PC-3 (cell line): ENCODE measurements at regions of chr1 and their contacts with region 1.

Region 1: GRCh38 chr1:221435504-221435904 is 306.4 kb downstream of the DUSP10 start:
- DNase-seq: peak; percentile 84
- ATAC-seq: peak; percentile 4
- H3K4me3 ChIP-seq: no peak overlapping the region
- H3K27ac ChIP-seq: no peak overlapping the region; the same call in 1 of the 2 replicates
- H3K4me1 ChIP-seq: peaks cover 39% of the 10 kb centered on the region
- H3K27me3 ChIP-seq: no peaks in the 10 kb centered on the region
- CTCF ChIP-seq: peak; percentile 99

Region 2: DNA sequence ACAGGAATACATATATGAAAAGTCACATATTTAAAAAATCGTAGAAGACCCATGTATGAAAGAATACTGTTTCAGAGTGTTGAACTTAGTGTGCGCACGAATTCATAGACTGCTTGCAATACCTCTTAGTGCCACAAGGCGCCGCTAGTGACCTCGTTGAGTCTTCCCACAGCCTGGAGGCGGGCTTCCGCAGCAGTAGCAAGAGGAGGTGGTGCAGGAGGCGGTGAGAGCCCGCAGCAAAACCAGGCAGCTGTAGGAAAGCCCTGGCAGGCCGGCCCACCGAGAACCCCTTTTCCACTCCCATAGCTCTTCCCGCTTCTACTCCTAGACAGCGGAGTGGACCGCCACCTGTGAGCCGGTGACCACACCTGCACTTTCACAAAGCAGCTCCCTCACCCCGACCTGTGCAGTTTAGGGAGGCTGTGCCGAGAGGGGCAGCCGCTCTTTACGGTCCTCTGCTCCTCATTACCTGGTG is 625.3 kb before region 1 on chr1:
- CTCF ChIA-PET with region 1: no interaction called
- POLR2A ChIA-PET with region 1: no interaction called
- intact Hi-C with region 1: loop called (anchors 1 kb)
- DNase-seq: peak; percentile 83
- ATAC-seq: peak; percentile 72
- H3K4me3 ChIP-seq: no peak overlapping the region
- H3K27ac ChIP-seq: no peak overlapping the region
- H3K4me1 ChIP-seq: no peaks in the 10 kb centered on the region
- H3K27me3 ChIP-seq: no peaks in the 10 kb centered on the region
- CTCF ChIP-seq: peak; percentile 95

Region 3: DNA sequence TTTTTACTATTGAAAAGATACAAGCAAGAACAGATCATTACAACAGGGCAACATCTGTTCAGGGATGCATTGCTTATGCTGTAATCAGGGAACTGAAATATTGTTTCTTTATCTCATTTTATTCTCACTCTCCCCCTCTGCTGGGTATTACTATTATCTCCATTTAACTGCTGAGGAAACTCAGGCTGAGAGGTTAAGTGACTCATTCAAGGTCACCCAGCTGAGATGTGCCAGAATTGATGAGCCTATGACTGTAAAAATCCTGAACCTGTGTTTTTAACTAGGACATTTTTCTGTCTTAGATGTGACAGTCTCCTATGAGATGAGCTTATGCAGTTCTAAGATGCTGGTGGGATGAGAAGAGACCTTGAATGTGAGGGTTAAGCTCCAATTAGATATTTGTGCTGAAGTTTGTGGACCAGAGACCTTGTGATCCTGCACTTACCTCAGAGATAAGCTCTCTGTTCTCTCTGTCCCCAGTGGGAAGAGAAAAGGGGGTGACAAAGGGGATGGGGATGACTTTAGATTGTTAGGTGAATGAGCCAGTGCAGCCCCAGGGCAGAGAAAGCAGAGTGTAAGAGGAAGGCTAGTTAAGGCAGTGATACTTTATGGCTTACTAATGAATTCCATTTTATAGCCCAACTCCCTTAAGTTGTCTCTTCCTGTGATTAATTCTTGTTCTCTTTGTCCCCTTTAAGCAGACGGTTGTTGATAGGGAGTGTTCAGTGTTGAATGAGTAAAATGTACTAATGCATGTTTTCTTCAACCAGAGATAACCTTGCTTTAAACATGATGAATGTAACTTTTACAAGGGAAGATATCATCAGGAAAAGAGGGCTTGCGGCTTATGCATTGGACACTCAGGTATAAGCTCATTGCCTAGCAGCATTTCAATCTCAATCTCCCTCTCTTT is 444.8 kb before region 1 on chr1:
- CTCF ChIA-PET with region 1: no interaction called
- POLR2A ChIA-PET with region 1: no interaction called
- intact Hi-C with region 1: loop called (anchors 5 kb)
- DNase-seq: peak; percentile 85
- ATAC-seq: peak; percentile 87
- H3K4me3 ChIP-seq: no peak overlapping the region
- H3K27ac ChIP-seq: peak overlapping the region; percentile 56
- H3K4me1 ChIP-seq: peaks cover 20% of the 10 kb centered on the region
- H3K27me3 ChIP-seq: no peaks in the 10 kb centered on the region
- CTCF ChIP-seq: peak; percentile 63

Region 4: DNA sequence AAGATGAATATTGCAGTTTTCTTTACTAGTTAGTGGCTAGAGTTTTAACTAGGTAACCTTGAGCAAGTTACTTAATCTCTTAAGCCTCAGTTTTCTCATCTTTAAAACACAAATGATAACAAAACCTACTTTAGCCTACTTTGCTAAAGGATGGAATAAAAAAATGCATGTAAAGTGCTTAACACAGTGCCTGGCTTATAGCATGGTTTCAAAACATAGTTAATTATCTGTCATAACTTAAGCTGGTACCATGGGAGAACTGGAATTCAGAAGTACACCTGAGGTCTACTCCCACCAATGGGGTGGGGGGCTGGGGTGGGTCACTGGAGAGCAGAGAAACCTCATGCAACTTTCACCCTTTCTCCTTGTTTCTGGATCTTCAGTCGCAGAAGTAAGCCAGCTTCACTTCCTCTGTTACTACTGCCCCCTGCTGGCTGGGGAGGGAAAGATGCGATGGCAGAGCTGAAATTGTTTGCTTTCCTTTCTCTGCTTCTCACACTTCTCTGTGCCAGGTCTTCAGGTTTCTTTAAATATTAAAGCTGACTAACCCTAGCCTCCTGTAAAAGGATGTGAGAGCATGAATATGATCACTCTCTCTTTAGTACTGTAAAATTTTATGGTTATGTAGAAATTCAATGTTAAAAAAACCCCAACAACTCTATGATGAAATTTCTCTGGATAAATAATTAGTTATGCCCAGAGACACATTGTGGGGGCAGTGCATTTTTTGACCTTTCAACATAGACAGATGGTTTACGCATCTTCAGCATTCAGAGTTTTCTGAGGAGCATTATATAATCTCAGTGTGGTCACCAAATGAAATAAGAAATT is 232.1 kb before region 1 on chr1:
- CTCF ChIA-PET with region 1: interaction called, 4 read pairs
- POLR2A ChIA-PET with region 1: no interaction called
- intact Hi-C with region 1: loop called (anchors 2 kb)
- DNase-seq: peak; percentile 94
- ATAC-seq: peak; percentile 95
- H3K4me3 ChIP-seq: no peak overlapping the region
- H3K27ac ChIP-seq: peak overlapping the region; percentile 8; the same call in 1 of the 2 replicates
- H3K4me1 ChIP-seq: peaks cover 17% of the 10 kb centered on the region
- H3K27me3 ChIP-seq: no peaks in the 10 kb centered on the region
- CTCF ChIP-seq: peak; percentile 87

Region 5: DNA sequence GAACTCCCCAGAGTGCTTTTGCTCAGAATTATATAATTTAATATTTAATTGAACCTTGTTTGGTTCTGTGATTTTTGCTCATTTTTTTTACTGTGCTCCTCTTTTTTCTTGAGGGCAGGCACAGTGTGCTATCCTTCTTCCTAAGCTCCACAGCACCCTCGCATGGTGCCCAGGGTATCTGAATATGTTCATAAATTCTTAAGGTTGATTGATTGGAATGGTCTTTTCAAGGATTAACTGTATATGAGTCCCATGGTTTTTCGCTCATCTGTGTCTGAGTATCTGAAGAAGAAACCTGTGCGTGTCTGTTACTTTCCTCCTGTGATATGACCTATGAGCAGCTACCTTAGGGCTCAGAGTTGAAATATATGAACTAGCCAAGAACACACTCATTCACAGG is 162.6 kb before region 1 on chr1:
- CTCF ChIA-PET with region 1: no interaction called
- POLR2A ChIA-PET with region 1: no interaction called
- intact Hi-C with region 1: loop called (anchors 2 kb)
- DNase-seq: peak; percentile 68
- ATAC-seq: peak; percentile 88
- H3K4me3 ChIP-seq: no peak overlapping the region
- H3K27ac ChIP-seq: no peak overlapping the region
- H3K4me1 ChIP-seq: no peaks in the 10 kb centered on the region
- H3K27me3 ChIP-seq: no peaks in the 10 kb centered on the region
- CTCF ChIP-seq: peak; percentile 81

Region 6: GRCh38 chr1:221514806-221515205 is 79.3 kb after region 1 on chr1:
- CTCF ChIA-PET with region 1: no interaction called
- POLR2A ChIA-PET with region 1: no interaction called
- intact Hi-C with region 1: loop called (anchors 1 kb)
- DNase-seq: no peak
- ATAC-seq: peak; percentile 11; the same call in 1 of the 2 replicates
- H3K4me3 ChIP-seq: no peak overlapping the region
- H3K27ac ChIP-seq: no peak overlapping the region
- H3K4me1 ChIP-seq: no peaks in the 10 kb centered on the region
- H3K27me3 ChIP-seq: no peaks in the 10 kb centered on the region
- CTCF ChIP-seq: no peak